WTC11 (cell line): ENCODE measurements at regions of chr3 and their contacts with region 1.

Region 1: DNA sequence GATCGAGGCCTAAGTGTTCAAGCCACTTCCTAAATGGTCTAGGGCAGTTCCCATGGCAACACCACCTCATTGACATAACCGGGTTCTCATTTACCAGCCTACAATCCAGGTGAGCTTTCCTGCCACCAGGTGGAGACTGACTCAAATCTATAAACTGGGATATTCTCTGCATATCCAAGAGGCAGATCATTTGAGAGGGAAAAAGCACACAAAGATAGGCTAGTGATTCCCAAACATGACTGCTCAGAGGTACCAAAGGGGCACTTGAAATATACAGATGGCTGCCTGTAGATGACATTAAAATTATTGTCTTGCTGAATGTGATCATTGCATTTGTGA is 141.3 kb upstream of the PROK2 start:
- DNase-seq: peak; percentile 70
- ATAC-seq: peak; percentile 78
- H3K4me3 Mint-ChIP-seq: peak overlapping the region; percentile 52
- H3K27ac Mint-ChIP-seq: peak overlapping the region; percentile 93
- H3K4me1 Mint-ChIP-seq: peaks cover 61% of the 10 kb centered on the region
- H3K27me3 Mint-ChIP-seq: no peaks in the 10 kb centered on the region; the same call in 1 of the 2 replicates
- CTCF ChIP-seq: peak; percentile 46; the same call in 1 of the 2 replicates

Region 2: DNA sequence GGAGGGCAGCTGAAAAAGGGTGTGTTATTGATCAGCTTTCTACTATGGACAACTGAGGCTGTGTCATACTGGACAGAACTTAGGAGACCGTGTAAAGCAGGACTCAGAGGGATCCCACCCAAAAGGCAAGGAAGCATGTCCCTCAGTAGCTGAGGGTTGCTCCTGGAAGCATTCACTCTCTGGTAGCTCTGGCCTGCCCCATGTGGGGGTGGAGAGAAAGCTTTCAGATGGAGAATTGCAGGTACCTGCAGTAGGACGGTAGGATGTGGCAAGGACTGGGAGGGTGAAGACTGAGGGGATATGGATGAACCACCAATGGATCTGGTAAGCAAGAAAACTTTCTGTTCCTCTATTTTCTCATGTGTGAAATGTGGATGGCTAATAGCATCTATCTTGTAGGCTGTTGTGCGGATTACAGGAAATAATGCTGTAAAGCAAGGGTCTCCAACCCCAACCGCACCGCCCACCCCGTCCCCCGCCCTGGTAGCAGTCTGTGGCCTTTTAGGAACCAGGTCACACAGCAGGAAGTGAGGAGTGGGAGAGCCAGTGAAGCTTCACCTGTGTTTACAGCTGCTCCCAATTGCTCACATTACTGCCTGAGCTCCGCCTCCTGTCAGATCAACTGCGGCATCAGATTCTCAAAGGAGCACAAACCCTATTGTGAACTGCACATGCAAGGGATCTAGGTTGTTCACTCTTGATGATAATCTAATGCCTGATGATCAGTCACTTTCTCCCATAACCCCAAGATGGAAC is 16.4 kb after region 1 on chr3:
- CTCF ChIA-PET with region 1: interaction called, 45 read pairs
- POLR2A ChIA-PET with region 1: no interaction called
- DNase-seq: peak; percentile 29
- ATAC-seq: peak; percentile 94
- H3K4me3 Mint-ChIP-seq: no peak overlapping the region
- H3K27ac Mint-ChIP-seq: no peak overlapping the region
- H3K4me1 Mint-ChIP-seq: peaks cover 10% of the 10 kb centered on the region
- H3K27me3 Mint-ChIP-seq: peaks cover 26% of the 10 kb centered on the region
- CTCF ChIP-seq: no peak

Region 3: DNA sequence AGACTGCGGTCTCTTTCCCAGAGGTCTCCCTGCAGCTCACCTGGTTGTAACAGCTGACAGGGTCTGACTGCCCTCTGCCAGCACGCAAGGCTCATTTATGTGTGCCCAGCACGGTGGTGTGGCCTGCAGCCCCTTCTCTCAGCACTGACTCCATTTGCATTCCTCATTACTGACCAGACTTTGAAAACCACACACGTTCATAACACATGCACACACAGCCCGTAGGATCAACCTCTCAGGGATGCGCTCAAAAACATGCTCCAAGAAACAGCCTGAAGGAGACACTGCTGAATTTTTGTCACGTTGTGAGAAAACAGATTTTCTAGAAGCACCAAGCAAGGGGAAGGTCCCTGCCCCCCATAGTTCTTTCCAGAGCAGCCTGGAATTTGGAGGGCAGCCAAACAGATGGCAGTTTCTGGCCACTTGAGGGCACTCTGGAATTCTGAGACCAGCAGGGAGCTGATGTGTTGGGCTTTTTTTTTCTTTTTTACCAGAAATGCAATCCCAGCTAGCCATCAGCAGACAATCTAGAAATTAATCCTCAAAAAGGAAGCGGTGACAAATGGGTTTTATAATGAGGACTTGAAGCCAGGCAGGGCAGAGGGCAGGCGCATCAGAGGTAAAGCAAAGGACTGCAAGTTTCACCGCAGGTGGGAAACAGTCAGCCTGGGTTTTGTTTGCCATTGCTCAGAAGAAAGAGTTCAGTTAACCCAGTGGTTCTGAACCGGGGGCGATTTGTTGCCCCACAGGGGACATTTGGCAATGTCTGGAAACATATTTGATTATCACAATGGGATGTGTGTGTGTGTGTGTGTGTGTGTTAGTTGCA is 29.2 kb after region 1 on chr3:
- CTCF ChIA-PET with region 1: interaction called, 32 read pairs
- POLR2A ChIA-PET with region 1: no interaction called
- DNase-seq: peak; percentile 64
- ATAC-seq: peak; percentile 78
- H3K4me3 Mint-ChIP-seq: no peak overlapping the region
- H3K27ac Mint-ChIP-seq: no peak overlapping the region; the same call in 1 of the 2 replicates
- H3K4me1 Mint-ChIP-seq: peaks cover 40% of the 10 kb centered on the region
- H3K27me3 Mint-ChIP-seq: no peaks in the 10 kb centered on the region
- CTCF ChIP-seq: peak; percentile 23; the same call in 1 of the 2 replicates

Region 4: GRCh38 chr3:72265256-72266015 is 339.2 kb after region 1 on chr3:
- CTCF ChIA-PET with region 1: interaction called, 12 read pairs
- POLR2A ChIA-PET with region 1: no interaction called
- DNase-seq: no peak
- ATAC-seq: peak; percentile 68
- H3K4me3 Mint-ChIP-seq: no peak overlapping the region
- H3K27ac Mint-ChIP-seq: no peak overlapping the region
- H3K4me1 Mint-ChIP-seq: peaks cover 19% of the 10 kb centered on the region
- H3K27me3 Mint-ChIP-seq: no peaks in the 10 kb centered on the region
- CTCF ChIP-seq: no peak

Region 5: GRCh38 chr3:72465853-72466252 is 539.6 kb after region 1 on chr3:
- CTCF ChIA-PET with region 1: no interaction called
- POLR2A ChIA-PET with region 1: no interaction called
- DNase-seq: no peak
- ATAC-seq: no peak
- H3K4me3 Mint-ChIP-seq: no peak overlapping the region
- H3K27ac Mint-ChIP-seq: no peak overlapping the region
- H3K4me1 Mint-ChIP-seq: no peaks in the 10 kb centered on the region
- H3K27me3 Mint-ChIP-seq: no peaks in the 10 kb centered on the region; the same call in 1 of the 2 replicates
- CTCF ChIP-seq: no peak